ENCODE measurements at regions of chr7 and their contacts with region 1.

Region 1: DNA sequence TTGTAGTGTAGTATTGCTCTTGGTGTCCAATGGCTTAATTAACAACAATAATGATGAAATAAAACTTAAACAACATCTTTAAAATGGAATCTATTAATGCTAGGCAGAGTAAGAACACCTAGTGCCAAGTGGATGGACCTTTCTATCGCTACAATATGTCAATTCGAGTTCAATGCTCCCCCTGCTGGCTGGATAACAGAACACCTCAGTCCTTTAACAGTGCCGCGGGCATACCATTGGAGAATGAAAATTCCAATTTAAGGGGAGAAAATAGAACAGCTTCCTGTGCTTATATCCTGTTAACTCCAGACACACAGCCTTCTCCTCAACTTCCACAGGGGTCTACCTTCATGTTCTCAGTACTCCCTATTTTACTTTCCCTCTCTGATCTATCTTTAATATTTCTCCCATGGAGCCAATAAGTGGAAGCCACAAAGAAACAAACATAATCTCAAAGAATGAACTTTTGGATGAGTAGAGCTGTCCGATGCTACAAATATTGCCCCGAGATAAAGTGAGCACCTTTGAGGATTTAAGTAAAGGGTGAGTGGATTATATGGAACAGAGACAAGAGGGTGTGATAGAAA is 41.4 kb downstream of the COL1A2 start:
- DNase-seq: peak in 4 of 5 donors; percentile 52 to 89 (median 74)
- H3K4me3 ChIP-seq: no peak overlapping the region
- H3K27ac ChIP-seq: no peak overlapping the region
- H3K4me1 ChIP-seq: no peaks in the 10 kb centered on the region
- H3K27me3 ChIP-seq: no peaks in the 10 kb centered on the region
- CTCF ChIP-seq: peak; percentile 78

Region 2: GRCh38 chr7:94289071-94289470 is 147.0 kb before region 1 on chr7:
- intact Hi-C with region 1: loop called (anchors 5 kb)
- DNase-seq: peak in 4 of 5 donors; percentile 71 to 92 (median 85)
- H3K4me3 ChIP-seq: no peak overlapping the region
- H3K27ac ChIP-seq: no peak overlapping the region
- H3K4me1 ChIP-seq: no peaks in the 10 kb centered on the region
- H3K27me3 ChIP-seq: no peaks in the 10 kb centered on the region
- CTCF ChIP-seq: peak; percentile 95